ENCODE measurements at regions of chr2 and their contacts with region 1.

Region 1: DNA sequence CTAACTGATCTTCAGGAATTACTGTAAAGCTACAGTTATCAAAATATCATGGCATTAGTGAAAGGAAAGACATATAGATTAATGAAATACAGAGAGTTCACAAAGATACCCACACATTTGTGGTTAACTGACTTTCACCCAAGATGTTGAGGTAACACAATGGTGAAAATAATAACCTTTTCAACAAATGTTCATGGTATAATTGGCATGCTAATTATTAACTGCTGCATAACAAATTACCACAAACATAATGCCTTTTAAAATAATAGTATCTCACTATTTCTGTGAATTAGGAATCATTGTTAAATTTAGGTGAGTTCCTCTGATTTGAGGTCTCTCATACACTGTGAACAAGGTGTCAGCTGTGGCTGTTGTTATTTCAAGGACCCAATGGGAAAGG is 1493.1 kb upstream of the ACVR2A start:
- DNase-seq: no peak
- H3K4me3 ChIP-seq: no peak overlapping the region
- H3K27ac ChIP-seq: no peak overlapping the region
- H3K4me1 ChIP-seq: no peaks in the 10 kb centered on the region
- CTCF ChIP-seq: no peak

Region 2: GRCh38 chr2:146870691-146871090 is 519.0 kb after region 1 on chr2:
- CTCF ChIA-PET with region 1: no interaction called
- POLR2A ChIA-PET with region 1: interaction called, 18 read pairs
- intact Hi-C with region 1: no loop called
- DNase-seq: no peak
- H3K4me3 ChIP-seq: no peak overlapping the region
- H3K27ac ChIP-seq: no peak overlapping the region
- H3K4me1 ChIP-seq: no peaks in the 10 kb centered on the region
- CTCF ChIP-seq: no peak